Activated CD8-positive, alpha-beta T cell treated with anti-CD3 and anti-CD28 coated beads for 36 hours (primary cell): ENCODE measurements at regions of chr10 and their contacts with region 1.

Region 1: DNA sequence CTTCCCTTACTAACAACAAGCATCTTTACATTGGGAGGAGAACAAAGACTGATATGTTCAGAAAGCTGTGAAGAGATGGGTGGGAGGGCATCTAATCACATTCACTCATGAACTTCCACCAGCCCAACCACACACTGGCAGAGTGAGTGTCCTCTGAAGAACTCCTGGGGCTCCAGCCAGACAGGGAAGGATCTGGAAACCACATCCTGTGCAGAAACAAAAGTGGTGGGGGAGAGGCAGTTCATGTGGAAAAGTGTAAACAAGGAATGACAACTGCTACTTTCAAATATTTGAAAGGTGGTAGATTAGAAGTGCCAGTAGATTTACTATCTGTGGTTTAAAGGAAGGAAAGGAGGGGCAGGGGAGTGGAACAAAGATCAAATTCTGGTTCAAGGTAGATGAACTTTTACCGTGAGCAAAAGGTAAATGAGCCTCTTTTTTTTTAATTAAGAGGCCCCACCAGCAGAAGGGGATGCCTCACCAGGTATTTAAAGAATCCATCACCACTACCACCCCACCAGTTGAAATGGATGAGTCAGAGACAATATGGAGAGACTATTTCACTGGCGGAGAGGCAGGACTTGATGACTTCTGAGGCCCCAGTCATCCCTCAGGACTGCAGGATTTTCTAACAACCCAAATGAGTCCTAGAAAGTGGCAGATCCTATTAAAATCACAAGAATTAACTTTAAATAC is 34.5 kb downstream of the GOT1 start:
- DNase-seq: no peak
- ATAC-seq: no peak
- H3K4me3 Mint-ChIP-seq: no peak overlapping the region
- H3K27ac Mint-ChIP-seq: no peak overlapping the region
- H3K4me1 Mint-ChIP-seq: peaks cover 4% of the 10 kb centered on the region
- H3K27me3 Mint-ChIP-seq: no peaks in the 10 kb centered on the region
- CTCF ChIP-seq: no peak

Region 2: GRCh38 chr10:99372546-99373271 is 23.2 kb before region 1 on chr10:
- CTCF ChIA-PET with region 1: interaction called, 12 read pairs
- POLR2A ChIA-PET with region 1: no interaction called
- intact Hi-C with region 1: no loop called
- DNase-seq: no peak
- ATAC-seq: no peak
- H3K4me3 Mint-ChIP-seq: no peak overlapping the region
- H3K27ac Mint-ChIP-seq: no peak overlapping the region
- H3K4me1 Mint-ChIP-seq: peaks cover 5% of the 10 kb centered on the region
- H3K27me3 Mint-ChIP-seq: peaks cover 32% of the 10 kb centered on the region
- CTCF ChIP-seq: no peak

Region 3: GRCh38 chr10:99410146-99410545 is 14.2 kb after region 1 on chr10:
- CTCF ChIA-PET with region 1: interaction called, 10 read pairs
- POLR2A ChIA-PET with region 1: no interaction called
- intact Hi-C with region 1: no loop called
- DNase-seq: no peak
- ATAC-seq: no peak
- H3K4me3 Mint-ChIP-seq: no peak overlapping the region
- H3K27ac Mint-ChIP-seq: no peak overlapping the region
- H3K4me1 Mint-ChIP-seq: no peaks in the 10 kb centered on the region
- H3K27me3 Mint-ChIP-seq: no peaks in the 10 kb centered on the region
- CTCF ChIP-seq: no peak